OCI-LY7 (cell line): ENCODE measurements at regions of chr2 and their contacts with region 1.

Region 1: DNA sequence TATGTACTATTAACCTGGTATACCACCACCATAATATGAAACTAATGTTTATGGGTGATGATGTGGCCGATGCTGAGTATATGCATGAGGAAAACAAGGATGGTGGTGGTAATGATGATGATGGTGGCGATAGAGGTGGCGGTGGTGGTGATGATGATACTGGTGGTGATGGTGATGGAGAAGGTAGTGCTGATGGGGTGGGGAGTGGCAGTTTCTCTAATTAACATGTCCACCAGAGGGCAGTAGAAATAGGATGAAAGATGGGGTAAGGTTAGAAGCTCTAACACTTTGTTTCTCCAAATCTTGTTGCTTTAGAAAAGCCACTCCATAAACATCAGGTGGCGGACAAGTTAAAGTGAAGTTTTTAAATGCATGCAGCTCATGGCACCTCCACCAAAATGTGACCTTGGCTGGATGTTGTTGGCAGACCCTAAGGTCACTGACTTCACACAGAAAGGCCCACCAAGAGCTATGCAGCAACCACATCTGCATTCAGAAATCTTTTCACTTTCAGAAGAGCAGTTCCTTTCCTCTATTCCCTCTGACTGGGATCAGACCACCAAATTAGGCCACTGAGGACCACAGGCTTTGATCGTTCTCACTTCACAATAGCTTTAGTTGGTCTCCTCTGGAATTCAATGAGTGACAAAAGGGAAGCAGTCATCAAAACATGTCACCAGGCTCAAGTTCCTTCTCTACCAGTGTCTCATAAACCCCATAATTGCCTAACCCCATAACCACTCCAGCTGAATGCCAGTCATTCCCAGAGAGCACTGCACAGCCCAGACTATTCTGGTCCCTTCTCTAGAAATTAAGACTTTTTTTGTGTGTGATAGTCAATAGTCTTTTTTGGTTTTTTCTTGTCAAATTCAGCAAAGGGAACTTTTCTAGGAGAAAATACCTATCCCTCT is 7.5 kb upstream of the BCL11A start:
- DNase-seq: peak; percentile 68
- H3K4me3 ChIP-seq: no peak overlapping the region
- H3K27ac ChIP-seq: no peak overlapping the region
- H3K4me1 ChIP-seq: peaks cover 29% of the 10 kb centered on the region
- CTCF ChIP-seq: peak; percentile 89

Region 2: GRCh38 chr2:59025157-59025757 is 1535.7 kb before region 1 on chr2:
- CTCF ChIA-PET with region 1: no interaction called
- POLR2A ChIA-PET with region 1: no interaction called
- intact Hi-C with region 1: loop called (anchors 5 kb)
- DNase-seq: peak; percentile 47
- H3K4me3 ChIP-seq: no peak overlapping the region
- H3K27ac ChIP-seq: no peak overlapping the region
- H3K4me1 ChIP-seq: no peaks in the 10 kb centered on the region
- CTCF ChIP-seq: peak; percentile 92

Region 3: GRCh38 chr2:59301466-59302402 is 1259.3 kb before region 1 on chr2:
- CTCF ChIA-PET with region 1: interaction called, 3 read pairs
- POLR2A ChIA-PET with region 1: no interaction called
- intact Hi-C with region 1: loop called (anchors 5 kb)
- DNase-seq: peak; percentile 60
- H3K4me3 ChIP-seq: no peak overlapping the region
- H3K27ac ChIP-seq: no peak overlapping the region
- H3K4me1 ChIP-seq: no peaks in the 10 kb centered on the region
- CTCF ChIP-seq: peak; percentile 75

Region 4: GRCh38 chr2:59790186-59791003 is 770.6 kb before region 1 on chr2:
- CTCF ChIA-PET with region 1: no interaction called
- POLR2A ChIA-PET with region 1: no interaction called
- intact Hi-C with region 1: loop called (anchors 10 kb)
- DNase-seq: no peak
- H3K4me3 ChIP-seq: no peak overlapping the region
- H3K27ac ChIP-seq: no peak overlapping the region
- H3K4me1 ChIP-seq: no peaks in the 10 kb centered on the region
- CTCF ChIP-seq: no peak